Left ventricle myocardium superior (tissue), 1 donor: ENCODE measurements at regions of chr1 and their contacts with region 1.

Region 1: GRCh38 chr1:210739627-210740026 is 394.3 kb downstream of the KCNH1 start:
- DNase-seq: no peak
- ATAC-seq: no peak

Region 2: GRCh38 chr1:210711825-210712612 is 27.6 kb before region 1 on chr1:
- intact Hi-C with region 1: loop called (anchors 1 kb)
- DNase-seq: peak; percentile 37
- ATAC-seq: peak; percentile 61